Activated CD4-positive, alpha-beta memory T cell treated with anti-CD3 and anti-CD28 coated beads for 36 hours (primary cell): ENCODE measurements at regions of chr1 and their contacts with region 1.

Region 1: DNA sequence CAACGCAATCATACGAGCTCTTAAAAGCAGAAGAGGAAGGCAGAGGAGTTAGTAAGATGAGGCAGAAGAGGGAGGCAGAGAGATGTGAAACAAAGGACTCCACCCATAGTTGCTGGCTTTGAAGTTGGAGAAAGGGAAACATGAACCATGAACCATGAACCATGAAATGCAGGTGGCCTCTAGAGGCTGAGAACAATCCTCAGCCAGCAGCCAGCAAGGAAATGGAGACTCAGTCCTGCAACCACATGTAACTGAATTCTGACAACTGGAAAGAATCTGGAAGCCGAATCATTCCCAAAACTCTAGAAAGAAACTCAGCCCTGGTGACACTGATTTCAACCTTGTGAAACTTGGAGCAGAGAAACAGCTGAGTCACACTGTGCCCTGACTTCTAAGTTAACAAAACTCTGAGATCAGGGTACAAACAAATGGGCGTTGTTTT is 10.1 kb downstream of the DIPK1A start:
- DNase-seq: peak; percentile 36
- H3K4me3 Mint-ChIP-seq: no peak overlapping the region
- H3K27ac Mint-ChIP-seq: no peak overlapping the region
- H3K4me1 Mint-ChIP-seq: peaks cover 36% of the 10 kb centered on the region
- H3K27me3 Mint-ChIP-seq: no peaks in the 10 kb centered on the region

Region 2: DNA sequence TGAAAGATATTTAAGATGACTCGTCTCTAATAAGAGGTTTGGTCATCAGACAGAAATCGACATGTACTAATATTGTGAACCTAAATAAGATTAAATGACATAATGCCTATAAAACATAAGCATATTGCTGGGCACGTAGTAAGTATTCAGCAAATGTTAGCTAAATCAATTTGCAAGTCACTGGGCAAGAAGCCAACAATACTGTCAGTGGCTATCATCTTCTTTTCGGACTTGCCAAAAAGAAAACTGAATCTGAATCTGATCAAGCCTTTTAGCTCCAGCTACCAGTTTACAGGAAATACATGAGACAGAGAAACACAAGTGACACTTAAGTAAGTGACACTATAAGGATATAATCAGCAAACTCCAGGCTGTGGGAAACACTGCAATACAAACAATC is 73.4 kb before region 1 on chr1:
- CTCF ChIA-PET with region 1: no interaction called
- POLR2A ChIA-PET with region 1: no interaction called
- intact Hi-C with region 1: loop called (anchors 5 kb)
- DNase-seq: no peak
- H3K4me3 Mint-ChIP-seq: peak overlapping the region; percentile 23
- H3K27ac Mint-ChIP-seq: peak overlapping the region; percentile 70
- H3K4me1 Mint-ChIP-seq: peaks cover 27% of the 10 kb centered on the region
- H3K27me3 Mint-ChIP-seq: no peaks in the 10 kb centered on the region

Region 3: GRCh38 chr1:92940541-92940940 is 10.6 kb before region 1 on chr1:
- CTCF ChIA-PET with region 1: no interaction called
- POLR2A ChIA-PET with region 1: no interaction called
- intact Hi-C with region 1: loop called (anchors 1 kb)
- DNase-seq: no peak
- H3K4me3 Mint-ChIP-seq: no peak overlapping the region
- H3K27ac Mint-ChIP-seq: no peak overlapping the region
- H3K4me1 Mint-ChIP-seq: peaks cover 54% of the 10 kb centered on the region
- H3K27me3 Mint-ChIP-seq: no peaks in the 10 kb centered on the region